ENCODE measurements at regions of chr5 and their contacts with region 1.

Region 1: GRCh38 chr5:88602584-88602983 is 280.4 kb downstream of the MEF2C start:
- DNase-seq: peak; percentile 7 to 81
- H3K4me3 ChIP-seq: no peak overlapping the region
- H3K27ac ChIP-seq: no peak overlapping the region
- H3K4me1 ChIP-seq: no peaks in the 10 kb centered on the region
- H3K27me3 ChIP-seq: no peaks in the 10 kb centered on the region
- CTCF ChIP-seq: peak; percentile 47 to 71 (median 70)
- EP300 ChIP-seq: no peak
- POLR2A ChIP-seq: no peak
- RAD21 ChIP-seq: peak; percentile 48 to 54

Region 2: GRCh38 chr5:88613050-88613449 is 10.5 kb after region 1 on chr5:
- CTCF ChIA-PET with region 1: interaction called, 16 read pairs
- POLR2A ChIA-PET with region 1: no interaction called
- DNase-seq: no peak
- H3K4me3 ChIP-seq: no peak overlapping the region
- H3K27ac ChIP-seq: no peak overlapping the region
- H3K4me1 ChIP-seq: no peaks in the 10 kb centered on the region
- H3K27me3 ChIP-seq: no peaks in the 10 kb centered on the region
- CTCF ChIP-seq: no peak
- EP300 ChIP-seq: no peak
- POLR2A ChIP-seq: no peak
- RAD21 ChIP-seq: no peak

Region 3: GRCh38 chr5:88707216-88707965 is 104.8 kb after region 1 on chr5:
- CTCF ChIA-PET with region 1: no interaction called
- POLR2A ChIA-PET with region 1: no interaction called
- DNase-seq: no peak
- H3K4me3 ChIP-seq: no peak overlapping the region
- H3K27ac ChIP-seq: no peak overlapping the region
- H3K4me1 ChIP-seq: peaks cover 0 to 17% (median 10%) of the 10 kb centered on the region in 4 experiments; a peak in 4 of 7 replicates
- H3K27me3 ChIP-seq: no peaks in the 10 kb centered on the region
- CTCF ChIP-seq: no peak
- EP300 ChIP-seq: no peak
- POLR2A ChIP-seq: no peak
- RAD21 ChIP-seq: no peak